WTC11 (cell line): ENCODE measurements at regions of chr6 and their contacts with region 1.

Region 1: DNA sequence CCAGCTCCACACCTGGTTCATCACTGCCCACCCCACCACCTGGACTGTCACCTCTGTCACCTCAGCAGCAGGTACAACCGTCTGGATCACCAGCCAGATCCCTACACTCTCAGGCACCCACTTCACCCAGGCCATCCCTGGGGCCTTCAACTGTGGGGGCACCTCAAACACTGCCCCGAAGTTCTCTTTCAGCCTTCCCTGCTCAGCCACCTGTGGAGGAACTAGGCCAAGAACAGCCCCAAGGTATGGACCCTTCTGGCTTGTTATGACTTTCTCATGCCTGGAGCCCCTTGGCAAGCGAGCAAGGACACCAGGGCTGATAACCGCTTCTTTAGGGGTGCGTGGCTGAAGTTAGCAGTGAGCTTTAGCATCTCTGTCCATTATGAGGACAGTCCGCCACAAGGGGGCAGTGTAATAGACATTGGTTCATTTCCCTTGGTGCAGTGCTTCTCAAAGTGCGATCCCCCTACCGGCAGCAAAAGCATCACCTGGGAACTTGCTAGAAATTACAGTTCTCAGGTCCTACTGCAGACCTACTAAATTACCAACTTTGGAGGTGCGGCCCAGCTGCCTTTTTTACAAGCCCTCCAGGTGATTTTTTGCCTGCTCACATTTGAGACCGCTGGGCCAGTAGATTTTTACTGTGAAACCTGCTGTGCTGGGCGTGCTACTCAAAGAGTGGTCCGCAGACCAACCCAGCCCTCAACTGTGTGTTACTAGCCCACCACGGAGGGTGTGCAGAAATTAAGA is 32.5 kb downstream of the PNPLA1 start:
- DNase-seq: peak; percentile 97
- ATAC-seq: peak; percentile 92
- H3K4me3 Mint-ChIP-seq: no peak overlapping the region
- H3K27ac Mint-ChIP-seq: peak overlapping the region; percentile 45; the same call in 1 of the 2 replicates
- H3K4me1 Mint-ChIP-seq: peaks cover 9% of the 10 kb centered on the region
- H3K27me3 Mint-ChIP-seq: no peaks in the 10 kb centered on the region
- CTCF ChIP-seq: peak; percentile 96

Region 2: GRCh38 chr6:36139429-36139828 is 163.0 kb before region 1 on chr6:
- CTCF ChIA-PET with region 1: interaction called, 19 read pairs
- POLR2A ChIA-PET with region 1: no interaction called
- DNase-seq: peak; percentile 71
- ATAC-seq: peak; percentile 91
- H3K4me3 Mint-ChIP-seq: no peak overlapping the region
- H3K27ac Mint-ChIP-seq: no peak overlapping the region; the same call in 1 of the 2 replicates
- H3K4me1 Mint-ChIP-seq: peaks cover 23% of the 10 kb centered on the region
- H3K27me3 Mint-ChIP-seq: no peaks in the 10 kb centered on the region; the same call in 1 of the 2 replicates
- CTCF ChIP-seq: 0 out of 2 replicates have a peak, but pooled peaks have one; percentile 21

Region 3: GRCh38 chr6:36277946-36278470 is 24.4 kb before region 1 on chr6:
- CTCF ChIA-PET with region 1: interaction called, 11 read pairs
- POLR2A ChIA-PET with region 1: no interaction called
- DNase-seq: no peak
- ATAC-seq: no peak
- H3K4me3 Mint-ChIP-seq: no peak overlapping the region
- H3K27ac Mint-ChIP-seq: no peak overlapping the region
- H3K4me1 Mint-ChIP-seq: no peaks in the 10 kb centered on the region
- H3K27me3 Mint-ChIP-seq: no peaks in the 10 kb centered on the region
- CTCF ChIP-seq: no peak

Region 4: DNA sequence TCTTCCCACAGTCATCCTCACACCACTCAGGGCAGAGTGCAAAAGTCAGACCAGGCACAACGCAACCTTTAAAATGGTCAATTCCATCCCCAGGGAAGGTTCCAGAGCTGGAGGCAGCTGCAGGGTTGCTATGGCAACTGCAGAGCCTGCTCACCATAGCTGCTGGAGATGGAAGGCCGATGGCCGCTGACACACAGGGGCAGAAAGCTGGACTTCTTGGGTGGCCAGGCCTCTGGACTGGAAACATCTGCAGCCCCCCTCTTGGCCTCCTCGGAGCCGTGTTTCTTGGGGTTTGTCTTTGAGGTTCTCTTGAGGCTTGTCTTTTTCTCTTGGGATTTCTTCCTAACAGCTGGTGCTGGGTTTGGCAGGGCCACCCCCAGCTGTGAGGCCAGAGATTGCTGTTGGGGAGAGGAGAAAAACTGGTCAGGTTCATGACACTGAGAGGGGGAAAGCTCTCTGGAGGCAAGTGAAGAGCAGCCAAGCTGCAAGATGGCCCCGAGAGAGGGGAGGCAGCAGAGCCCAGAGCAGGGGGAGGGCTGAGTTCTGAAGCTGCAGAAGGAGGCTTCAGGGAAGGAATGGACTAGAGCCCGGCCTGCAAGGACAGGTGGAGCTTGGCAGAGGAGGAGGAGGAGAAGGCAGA is 24.1 kb after region 1 on chr6:
- CTCF ChIA-PET with region 1: interaction called, 43 read pairs
- POLR2A ChIA-PET with region 1: no interaction called
- DNase-seq: no peak
- ATAC-seq: no peak
- H3K4me3 Mint-ChIP-seq: no peak overlapping the region
- H3K27ac Mint-ChIP-seq: no peak overlapping the region
- H3K4me1 Mint-ChIP-seq: peaks cover 21% of the 10 kb centered on the region
- H3K27me3 Mint-ChIP-seq: no peaks in the 10 kb centered on the region
- CTCF ChIP-seq: no peak

Region 5: DNA sequence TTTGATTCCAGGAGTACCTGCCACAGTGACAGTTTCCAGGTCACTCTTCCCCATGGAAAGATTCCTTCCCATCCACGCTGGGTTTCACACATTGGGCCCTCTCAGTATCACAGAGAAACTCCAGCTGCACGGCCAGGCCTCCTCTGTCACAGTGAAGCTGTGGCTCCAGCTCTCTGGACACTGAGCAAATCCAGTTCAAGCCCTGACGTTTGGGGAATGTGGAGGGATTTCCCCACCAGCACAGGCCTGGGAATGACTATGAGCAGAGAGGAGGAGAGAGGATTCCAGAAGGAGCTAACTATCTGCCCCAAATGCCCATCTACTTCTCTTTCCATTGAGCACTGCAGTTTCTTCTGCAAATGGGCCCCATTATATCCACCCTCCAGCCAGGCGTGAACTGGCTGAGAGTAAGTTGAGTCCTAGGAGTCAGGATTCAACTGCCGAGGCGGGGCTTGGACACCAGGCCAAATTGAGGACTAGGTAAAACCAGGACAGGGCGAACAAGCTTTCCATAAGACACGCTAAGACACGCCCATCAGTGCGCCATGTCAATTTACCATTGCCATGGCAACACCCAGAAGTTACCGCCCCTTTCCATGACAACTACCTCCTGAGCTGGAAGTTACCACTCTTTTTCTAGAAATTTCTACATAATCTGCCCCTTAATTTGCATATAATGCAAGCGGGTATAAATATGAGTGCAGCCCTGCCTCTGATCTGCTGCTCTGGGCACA is 43.4 kb after region 1 on chr6:
- CTCF ChIA-PET with region 1: interaction called, 30 read pairs
- POLR2A ChIA-PET with region 1: interaction called, 4 read pairs
- DNase-seq: peak; percentile 54
- ATAC-seq: peak; percentile 79
- H3K4me3 Mint-ChIP-seq: no peak overlapping the region
- H3K27ac Mint-ChIP-seq: no peak overlapping the region
- H3K4me1 Mint-ChIP-seq: peaks cover 14% of the 10 kb centered on the region
- H3K27me3 Mint-ChIP-seq: 0 out of 2 replicates have a peak, but pooled peaks cover under 1% of the 10 kb centered on the region
- CTCF ChIP-seq: no peak